ENCODE measurements at regions of chr4 and their contacts with region 1.

Region 1: GRCh38 chr4:55409468-55410171 is 13.9 kb downstream of the TMEM165 start:
- DNase-seq: peak; percentile 39
- ATAC-seq: peak; percentile 93
- H3K4me3 ChIP-seq: no peak overlapping the region
- H3K27ac ChIP-seq: no peak overlapping the region
- H3K4me1 ChIP-seq: no peaks in the 10 kb centered on the region
- H3K27me3 ChIP-seq: no peaks in the 10 kb centered on the region
- CTCF ChIP-seq: peak; percentile 57 to 79 (median 72)
- EP300 ChIP-seq: no peak
- POLR2A ChIP-seq: no peak
- RAD21 ChIP-seq: peak; percentile 71

Region 2: DNA sequence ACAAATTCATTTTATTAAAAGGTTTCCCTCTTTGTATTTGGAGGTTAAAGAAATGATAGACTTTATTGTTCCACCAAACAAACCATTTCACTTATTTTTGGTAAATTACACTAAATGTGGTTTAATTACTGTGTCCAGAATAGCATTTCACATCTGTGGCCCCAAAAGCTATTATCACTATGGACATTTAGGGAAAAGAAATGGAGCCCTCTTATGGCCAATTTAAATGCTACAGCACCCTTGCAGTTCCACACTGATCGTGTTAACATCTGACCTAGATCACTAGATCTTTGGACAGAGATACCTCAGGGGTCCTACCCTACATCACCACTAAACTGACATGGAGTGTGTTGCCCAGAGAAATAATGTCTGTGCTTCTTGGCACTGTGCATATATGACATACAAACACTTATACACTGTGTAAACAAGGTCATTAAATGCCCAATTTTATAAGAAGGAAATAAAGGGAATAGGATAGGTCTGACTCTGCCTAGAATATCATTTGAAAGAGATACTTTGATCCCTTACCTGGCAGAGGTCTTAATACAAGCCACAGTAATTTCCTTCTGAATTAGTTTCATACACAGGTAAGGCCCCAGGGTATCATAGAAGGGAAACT is 448.2 kb before region 1 on chr4:
- CTCF ChIA-PET with region 1: no interaction called
- POLR2A ChIA-PET with region 1: no interaction called
- RAD21 ChIA-PET with region 1: no interaction called
- SMC1A ChIA-PET with region 1: no interaction called
- in situ Hi-C with region 1: no loop called
- intact Hi-C with region 1: no loop called
- DNase-seq: no peak
- ATAC-seq: peak; percentile 49
- H3K4me3 ChIP-seq: no peak overlapping the region
- H3K27ac ChIP-seq: no peak overlapping the region
- H3K4me1 ChIP-seq: no peaks in the 10 kb centered on the region
- H3K27me3 ChIP-seq: no peaks in the 10 kb centered on the region
- CTCF ChIP-seq: peak in 2 of 3 experiments; percentile 46; a peak in 4 of 6 replicates
- EP300 ChIP-seq: no peak
- POLR2A ChIP-seq: no peak
- RAD21 ChIP-seq: peak; percentile 53

Region 3: GRCh38 chr4:55345980-55346850 is 63.4 kb before region 1 on chr4 and contains the start of gene SRD5A3:
- CTCF ChIA-PET with region 1: interaction called, 14 read pairs
- POLR2A ChIA-PET with region 1: no interaction called
- RAD21 ChIA-PET with region 1: interaction called, 6 read pairs
- SMC1A ChIA-PET with region 1: interaction called, 8 read pairs
- in situ Hi-C with region 1: no loop called
- intact Hi-C with region 1: no loop called
- DNase-seq: peak; percentile 19
- ATAC-seq: peak; percentile 98
- H3K4me3 ChIP-seq: peak within 1 kb of the TSS; percentile 76
- H3K27ac ChIP-seq: peak within 1 kb of the TSS; percentile 48
- H3K4me1 ChIP-seq: no peaks in the 10 kb centered on the region
- H3K27me3 ChIP-seq: no peaks in the 10 kb centered on the region
- CTCF ChIP-seq: peak; percentile 77 to 86 (median 84)
- EP300 ChIP-seq: no peak
- POLR2A ChIP-seq: peak; percentile 87
- RAD21 ChIP-seq: peak; percentile 74
- polyA plus RNA-seq, gene SRD5A3: 1.6 to 4.5 TPM

Region 4: GRCh38 chr4:55437356-55437796 is 27.8 kb after region 1 on chr4:
- CTCF ChIA-PET with region 1: interaction called, 11 read pairs
- POLR2A ChIA-PET with region 1: interaction called, 3 read pairs
- RAD21 ChIA-PET with region 1: interaction called, 3 read pairs
- SMC1A ChIA-PET with region 1: interaction called, 5 read pairs
- in situ Hi-C with region 1: no loop called
- intact Hi-C with region 1: no loop called
- DNase-seq: no peak
- ATAC-seq: no peak
- H3K4me3 ChIP-seq: no peak overlapping the region
- H3K27ac ChIP-seq: no peak overlapping the region
- H3K4me1 ChIP-seq: peaks cover 7% of the 10 kb centered on the region
- H3K27me3 ChIP-seq: no peaks in the 10 kb centered on the region
- CTCF ChIP-seq: no peak
- EP300 ChIP-seq: no peak
- POLR2A ChIP-seq: no peak
- RAD21 ChIP-seq: no peak

Region 5: GRCh38 chr4:55554453-55555030 is 144.9 kb after region 1 on chr4:
- CTCF ChIA-PET with region 1: interaction called, 30 read pairs
- POLR2A ChIA-PET with region 1: interaction called, 3 read pairs
- RAD21 ChIA-PET with region 1: interaction called, 11 read pairs
- SMC1A ChIA-PET with region 1: interaction called, 17 read pairs
- in situ Hi-C with region 1: no loop called
- intact Hi-C with region 1: loop called (anchors 1 kb)
- DNase-seq: no peak
- ATAC-seq: peak; percentile 70
- H3K4me3 ChIP-seq: no peak overlapping the region
- H3K27ac ChIP-seq: no peak overlapping the region
- H3K4me1 ChIP-seq: no peaks in the 10 kb centered on the region
- H3K27me3 ChIP-seq: no peaks in the 10 kb centered on the region
- CTCF ChIP-seq: peak; percentile 31 to 47 (median 33); a peak in 4 of 6 replicates
- EP300 ChIP-seq: no peak
- POLR2A ChIP-seq: no peak
- RAD21 ChIP-seq: peak; percentile 63

Region 6: DNA sequence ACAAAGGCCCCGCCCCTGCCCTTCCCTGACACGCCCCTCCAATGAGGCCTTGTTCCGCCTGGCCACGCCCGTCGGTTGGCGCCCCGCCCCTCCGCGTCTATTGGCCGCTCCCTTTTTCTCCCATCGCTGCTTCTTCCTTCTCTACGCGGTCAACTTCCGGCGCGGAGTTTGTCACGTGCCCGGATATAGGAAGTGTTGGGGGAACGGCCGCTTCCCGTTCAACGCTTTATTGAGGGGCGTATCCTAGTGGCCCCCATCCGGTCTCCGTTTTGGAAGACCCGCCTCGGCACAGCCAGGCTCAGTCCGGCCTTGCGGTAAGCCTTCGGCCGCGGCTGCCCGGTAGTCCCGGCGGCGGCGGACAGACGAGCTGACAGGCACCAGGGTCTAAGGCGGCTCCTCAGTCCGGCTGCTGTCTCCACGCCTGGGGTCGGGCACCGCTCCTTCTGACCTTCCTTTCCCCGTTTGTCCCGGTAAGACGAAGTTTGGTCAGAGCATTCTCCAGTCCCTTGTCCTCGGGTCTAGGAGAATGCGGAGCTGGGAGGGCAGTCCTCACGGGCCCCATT is 443.9 kb after region 1 on chr4 and contains the start of gene EXOC1:
- CTCF ChIA-PET with region 1: no interaction called
- POLR2A ChIA-PET with region 1: no interaction called
- RAD21 ChIA-PET with region 1: no interaction called
- SMC1A ChIA-PET with region 1: no interaction called
- in situ Hi-C with region 1: loop called (anchors 25 kb)
- intact Hi-C with region 1: no loop called
- DNase-seq: peak; percentile 82
- ATAC-seq: peak; percentile 98
- H3K4me3 ChIP-seq: peak within 1 kb of the TSS; percentile 84
- H3K27ac ChIP-seq: peak within 1 kb of the TSS; percentile 85
- H3K4me1 ChIP-seq: no peaks in the 10 kb centered on the region
- H3K27me3 ChIP-seq: no peaks in the 10 kb centered on the region
- CTCF ChIP-seq: no peak
- EP300 ChIP-seq: no peak
- POLR2A ChIP-seq: peak; percentile 89
- RAD21 ChIP-seq: no peak
- polyA plus RNA-seq, gene EXOC1: 11.8 to 13.9 TPM

Region 7: DNA sequence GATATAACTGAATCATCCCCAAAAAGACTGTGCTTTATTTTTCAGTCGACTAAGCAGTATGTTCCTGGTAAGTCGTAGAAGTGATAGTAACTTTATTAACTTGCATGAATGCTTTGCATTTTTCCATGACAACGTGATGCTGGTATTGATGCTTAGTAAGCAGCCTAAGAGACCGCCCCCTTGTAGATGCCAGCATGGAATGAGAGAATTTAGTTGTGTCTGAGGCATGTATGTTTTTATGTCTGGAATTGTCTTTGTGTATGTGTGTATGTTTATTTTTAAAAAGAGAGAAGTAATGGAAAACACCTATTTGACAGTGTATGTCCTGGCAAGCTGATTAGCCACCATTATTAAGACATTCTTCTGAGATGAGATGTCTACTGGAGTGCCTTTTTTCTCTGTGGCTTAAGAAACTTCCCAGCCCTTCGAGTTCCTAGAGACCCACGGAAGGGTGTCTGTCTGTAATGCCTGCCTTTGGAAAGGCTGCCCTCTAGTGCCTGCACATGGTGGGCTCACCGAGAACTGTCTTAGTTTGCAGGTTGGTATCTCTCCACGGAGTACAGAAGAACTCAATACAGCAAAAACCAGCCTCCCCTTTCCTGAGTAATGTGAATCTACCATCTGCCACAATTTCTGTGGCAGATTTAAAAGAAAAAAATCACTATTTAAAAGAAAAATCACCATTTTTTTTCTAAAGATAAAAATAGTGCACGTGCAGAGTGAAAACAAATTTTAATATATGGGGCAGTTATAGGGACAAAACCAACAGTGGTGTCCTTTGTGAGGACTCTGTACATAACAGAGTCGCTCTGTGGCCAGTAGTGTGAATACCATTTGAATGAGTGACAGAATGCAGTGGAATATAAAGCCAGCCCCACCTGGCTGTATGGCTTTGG is 891.8 kb after region 1 on chr4:
- CTCF ChIA-PET with region 1: no interaction called
- POLR2A ChIA-PET with region 1: no interaction called
- RAD21 ChIA-PET with region 1: no interaction called
- SMC1A ChIA-PET with region 1: interaction called, 5 read pairs
- in situ Hi-C with region 1: no loop called
- intact Hi-C with region 1: loop called (anchors 10 kb)
- DNase-seq: peak; percentile 43
- ATAC-seq: peak; percentile 99
- H3K4me3 ChIP-seq: no peak overlapping the region
- H3K27ac ChIP-seq: no peak overlapping the region
- H3K4me1 ChIP-seq: no peaks in the 10 kb centered on the region
- H3K27me3 ChIP-seq: no peaks in the 10 kb centered on the region
- CTCF ChIP-seq: peak; percentile 90 to 97 (median 90)
- EP300 ChIP-seq: no peak
- POLR2A ChIP-seq: no peak
- RAD21 ChIP-seq: peak; percentile 99

Measured in GM12878 (cell line).